Naive thymus-derived CD8-positive, alpha-beta T cell (primary cell): ENCODE measurements at regions of chr5 and their contacts with region 1.

Region 1: GRCh38 chr5:52840277-52841050 is 52.7 kb downstream of the ITGA1 start:
- DNase-seq: no peak
- ATAC-seq: no peak
- H3K4me3 Mint-ChIP-seq: no peak overlapping the region
- H3K27ac Mint-ChIP-seq: peak overlapping the region in 2 of 10 donors; percentile 12 to 29
- H3K4me1 Mint-ChIP-seq: peaks cover 0 to 5% (median 2%) of the 10 kb centered on the region in 4 donors
- H3K27me3 Mint-ChIP-seq: no peaks in the 10 kb centered on the region

Region 2: GRCh38 chr5:52811067-52811749 is 29.3 kb before region 1 on chr5:
- POLR2A ChIA-PET with region 1: interaction called, 12 read pairs
- DNase-seq: no peak
- ATAC-seq: no peak
- H3K4me3 Mint-ChIP-seq: no peak overlapping the region
- H3K27ac Mint-ChIP-seq: no peak overlapping the region
- H3K4me1 Mint-ChIP-seq: peaks cover 0 to 4% (median under 1%) of the 10 kb centered on the region in 4 donors
- H3K27me3 Mint-ChIP-seq: no peaks in the 10 kb centered on the region

Region 3: GRCh38 chr5:52893105-52893504 is 52.6 kb after region 1 on chr5:
- POLR2A ChIA-PET with region 1: no interaction called
- DNase-seq: no peak
- ATAC-seq: no peak
- H3K4me3 Mint-ChIP-seq: no peak overlapping the region
- H3K27ac Mint-ChIP-seq: peak overlapping the region in 1 of 10 donors; percentile 35
- H3K4me1 Mint-ChIP-seq: peaks cover 0 to 2% (median 0%) of the 10 kb centered on the region in 4 donors
- H3K27me3 Mint-ChIP-seq: peaks cover 0 to 4% (median 0%) of the 10 kb centered on the region in 5 donors